ENCODE measurements at regions of chr12 and their contacts with region 1.

Region 1: DNA sequence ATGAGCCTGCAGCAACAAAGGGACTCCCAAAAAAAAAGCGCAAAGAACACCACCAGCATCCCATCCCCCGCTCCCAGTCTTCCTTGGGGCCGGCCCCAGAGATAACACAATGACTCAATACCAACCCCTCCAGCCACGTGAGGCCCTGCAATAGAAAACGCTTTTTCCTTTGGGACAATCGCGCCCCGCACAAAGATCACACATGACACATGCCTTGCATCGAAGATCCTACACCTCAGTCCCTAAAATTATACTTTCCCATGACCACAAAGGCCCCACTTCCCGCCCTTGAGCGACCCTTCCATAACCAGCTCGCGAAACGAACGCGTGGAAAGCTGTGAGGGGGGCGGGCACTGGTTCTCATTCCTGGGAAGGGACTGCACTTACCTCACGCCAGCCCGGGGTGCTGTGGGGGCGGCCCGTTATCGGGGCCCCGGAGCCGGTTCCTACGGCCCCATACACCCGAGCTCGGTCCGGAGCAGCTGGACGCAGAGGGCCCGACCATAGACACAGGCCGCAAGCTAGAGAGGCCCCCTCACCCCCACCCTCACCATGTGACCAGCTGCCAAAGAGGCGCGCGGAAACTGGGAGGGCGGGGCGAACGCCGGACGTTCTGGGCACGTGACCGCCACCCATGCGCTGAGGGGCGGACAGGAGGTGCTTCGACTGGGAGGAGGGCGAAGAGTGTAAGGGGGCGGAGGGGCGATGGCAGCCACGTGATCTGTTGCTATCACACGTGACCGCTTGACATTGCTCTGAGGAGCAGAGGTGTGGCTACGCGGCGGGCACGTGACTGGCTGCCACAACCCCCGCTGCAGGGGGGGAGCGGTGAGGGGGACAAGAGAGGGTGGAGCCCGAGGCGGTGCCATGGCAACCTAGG is at the start of gene CDK4:
- DNase-seq: peak; percentile 92 to 100 (median 99)
- ATAC-seq: peak; percentile 89
- H3K4me3 ChIP-seq: peak within 1 kb of the TSS; percentile 79
- H3K4me3 Mint-ChIP-seq: peak within 1 kb of the TSS; percentile 82 to 98 (median 92)
- H3K27ac ChIP-seq: peak within 1 kb of the TSS; percentile 90
- H3K27ac Mint-ChIP-seq: peak within 1 kb of the TSS; percentile 86 to 99 (median 93)
- H3K4me1 ChIP-seq: peaks cover 32 to 42% of the 10 kb centered on the region in 2 donors
- H3K4me1 Mint-ChIP-seq: peaks cover 35 to 62% (median 59%) of the 10 kb centered on the region in 7 donors
- H3K27me3 ChIP-seq: no peaks in the 10 kb centered on the region
- H3K27me3 Mint-ChIP-seq: peaks cover 0 to 2% (median 0%) of the 10 kb centered on the region in 5 donors
- total RNA-seq, gene CDK4: 23.8 to 108 (median 42.9) TPM

Region 2: GRCh38 chr12:55829967-55830600 is 1921.9 kb before region 1 on chr12:
- CTCF ChIA-PET with region 1: no interaction called
- POLR2A ChIA-PET with region 1: no interaction called
- intact Hi-C with region 1: loop called in 1 of 2 experiments (anchors 10 kb)
- DNase-seq: peak in 5 of 9 donors; percentile 16 to 44 (median 20)
- ATAC-seq: peak; percentile 2
- H3K4me3 ChIP-seq: peak overlapping the region; percentile 99
- H3K4me3 Mint-ChIP-seq: peak overlapping the region; percentile 88 to 99 (median 99)
- H3K27ac ChIP-seq: peak overlapping the region; percentile 84
- H3K27ac Mint-ChIP-seq: peak overlapping the region; percentile 85 to 98 (median 95)
- H3K4me1 ChIP-seq: peaks cover 37 to 40% of the 10 kb centered on the region in 2 donors
- H3K4me1 Mint-ChIP-seq: peaks cover 42 to 69% (median 53%) of the 10 kb centered on the region in 7 donors
- H3K27me3 ChIP-seq: no peaks in the 10 kb centered on the region
- H3K27me3 Mint-ChIP-seq: no peaks in the 10 kb centered on the region

Region 3: DNA sequence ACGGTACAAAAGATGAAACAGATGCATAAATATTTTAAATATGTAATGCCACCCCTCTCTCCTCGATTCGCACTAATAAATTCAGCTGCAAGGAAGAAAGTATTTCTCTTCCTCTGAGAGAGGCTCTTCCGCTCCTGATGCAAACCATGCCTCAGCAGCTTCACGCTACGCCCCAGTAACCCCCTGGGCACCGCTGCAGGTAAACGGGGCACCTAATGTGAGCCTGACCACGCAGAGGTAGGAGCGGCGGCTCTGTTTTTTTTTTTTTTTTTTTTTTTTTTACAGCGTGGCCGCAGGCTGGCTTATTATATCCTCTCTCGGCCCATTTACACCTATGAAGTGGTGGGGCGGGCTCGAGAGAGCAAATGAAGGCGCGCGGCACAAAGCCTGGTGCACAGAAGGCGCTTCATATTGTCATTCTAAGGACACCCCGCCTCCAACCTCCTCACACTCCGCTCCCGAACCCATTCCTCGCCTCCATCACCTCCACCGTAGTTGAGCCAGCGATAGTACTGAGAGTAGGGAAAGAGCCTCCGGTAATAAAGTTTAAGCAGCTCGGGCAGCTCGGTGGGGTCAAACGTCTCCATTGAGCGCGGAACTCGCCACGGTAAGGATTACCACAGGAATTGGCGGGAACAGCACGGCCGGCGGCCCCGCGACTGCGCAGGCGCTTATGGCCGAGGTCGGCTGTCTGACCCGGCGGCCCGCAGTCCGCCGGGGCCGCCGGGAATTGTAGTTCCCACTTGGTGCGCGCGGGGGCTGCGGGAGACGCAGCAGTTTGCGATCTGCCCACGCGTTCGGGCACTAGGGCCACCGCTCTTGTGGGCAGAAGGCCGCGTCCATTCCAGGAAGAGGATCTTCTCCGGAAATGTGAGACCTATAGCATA is 1000.1 kb before region 1 on chr12 and contains the start of gene PRIM1:
- CTCF ChIA-PET with region 1: no interaction called
- POLR2A ChIA-PET with region 1: no interaction called
- intact Hi-C with region 1: loop called in 1 of 2 experiments (anchors 10 kb)
- DNase-seq: peak; percentile 69 to 91 (median 78)
- ATAC-seq: peak; percentile 93
- H3K4me3 ChIP-seq: peak within 1 kb of the TSS; percentile 98
- H3K4me3 Mint-ChIP-seq: peak within 1 kb of the TSS; percentile 88 to 98 (median 97)
- H3K27ac ChIP-seq: peak within 1 kb of the TSS; percentile 81
- H3K27ac Mint-ChIP-seq: peak within 1 kb of the TSS; percentile 80 to 99 (median 93)
- H3K4me1 ChIP-seq: peaks cover 3 to 7% of the 10 kb centered on the region in 2 donors
- H3K4me1 Mint-ChIP-seq: peaks cover 22 to 46% (median 42%) of the 10 kb centered on the region in 7 donors
- H3K27me3 ChIP-seq: no peaks in the 10 kb centered on the region
- H3K27me3 Mint-ChIP-seq: no peaks in the 10 kb centered on the region
- total RNA-seq, gene PRIM1: 11.5 to 39.8 (median 26.2) TPM

Region 4: DNA sequence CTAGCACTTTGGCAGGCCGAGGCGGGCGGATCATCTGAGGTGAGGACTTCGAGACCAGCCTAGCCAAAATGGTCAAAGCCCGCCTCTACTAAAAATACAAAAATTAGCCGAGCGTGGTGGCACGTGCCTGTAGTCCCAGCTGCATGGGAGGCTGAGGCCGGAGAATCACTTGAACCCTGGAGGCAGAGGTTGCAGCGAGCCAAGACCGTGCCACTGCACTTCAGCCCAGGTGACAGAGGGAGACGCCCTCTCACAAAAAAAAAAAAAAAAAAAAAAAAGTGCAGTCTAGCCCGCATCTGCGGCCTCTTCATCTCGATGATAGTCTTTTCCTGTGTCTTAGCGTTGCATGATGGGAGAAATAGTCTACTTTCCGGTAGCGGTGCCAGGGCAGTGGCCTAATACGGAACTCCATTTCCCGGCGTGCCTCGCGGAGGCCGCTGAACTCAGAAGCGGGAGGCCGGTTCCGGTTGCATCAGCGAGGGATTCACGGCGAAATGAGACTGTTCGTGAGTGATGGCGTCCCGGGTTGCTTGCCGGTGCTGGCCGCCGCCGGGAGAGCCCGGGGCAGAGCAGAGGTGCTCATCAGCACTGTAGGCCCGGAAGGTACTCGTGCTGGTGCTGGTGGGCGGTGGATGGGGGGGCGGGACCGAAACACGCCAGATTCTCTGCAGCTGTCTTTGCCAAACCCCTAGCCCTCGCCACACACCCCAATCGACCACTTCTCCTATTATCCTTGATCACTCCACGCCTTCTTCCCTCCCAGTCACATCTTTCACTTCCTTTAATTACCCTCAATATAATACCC is 264.2 kb before region 1 on chr12 and contains the start of gene MARS1:
- CTCF ChIA-PET with region 1: no interaction called
- POLR2A ChIA-PET with region 1: no interaction called
- intact Hi-C with region 1: loop called in 1 of 2 experiments (anchors 1 kb)
- DNase-seq: peak; percentile 71 to 95 (median 93)
- ATAC-seq: peak; percentile 99
- H3K4me3 ChIP-seq: peak within 1 kb of the TSS; percentile 89
- H3K4me3 Mint-ChIP-seq: peak within 1 kb of the TSS; percentile 89 to 100 (median 98)
- H3K27ac ChIP-seq: peak within 1 kb of the TSS; percentile 86
- H3K27ac Mint-ChIP-seq: peak within 1 kb of the TSS; percentile 86 to 99 (median 96)
- H3K4me1 ChIP-seq: peaks cover 17 to 21% of the 10 kb centered on the region in 2 donors
- H3K4me1 Mint-ChIP-seq: peaks cover 21 to 48% (median 40%) of the 10 kb centered on the region in 7 donors
- H3K27me3 ChIP-seq: no peaks in the 10 kb centered on the region
- H3K27me3 Mint-ChIP-seq: peaks cover 0 to 2% (median 0%) of the 10 kb centered on the region in 5 donors
- total RNA-seq, gene MARS1: 178 to 229 (median 197) TPM

Region 5: DNA sequence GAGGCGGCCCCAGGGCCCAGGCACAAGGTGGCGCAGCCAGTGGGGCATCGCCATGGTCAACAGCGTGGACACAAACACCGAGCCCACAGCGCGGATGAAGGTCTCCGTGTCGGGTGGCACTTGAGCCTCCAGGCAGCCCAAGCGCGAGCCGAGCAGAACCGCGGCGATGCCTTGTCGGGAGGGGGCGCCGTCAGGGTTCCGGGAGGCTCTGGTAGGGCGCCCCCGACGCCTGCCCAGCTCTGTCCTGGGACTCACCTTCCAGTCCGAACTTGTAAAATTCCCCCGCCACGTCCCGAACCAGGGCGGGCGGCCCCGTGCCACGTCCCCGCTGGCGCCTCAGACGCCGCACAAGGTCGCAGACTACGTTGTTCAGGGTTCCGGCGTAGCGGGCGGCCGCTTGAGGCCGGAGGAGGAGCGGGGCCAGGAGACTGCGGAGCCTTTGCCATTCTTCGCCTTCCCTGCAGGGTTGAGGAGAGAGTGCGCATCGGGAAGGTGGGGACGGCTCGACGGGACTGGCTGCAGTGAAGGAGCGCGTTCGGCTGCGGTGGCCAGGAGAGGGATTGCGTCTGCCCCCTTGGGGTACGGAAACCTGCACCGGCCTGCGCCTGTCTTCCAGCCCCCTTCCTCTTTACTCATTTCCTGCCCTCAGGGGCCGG is 13.1 kb after region 1 on chr12:
- CTCF ChIA-PET with region 1: interaction called, 14 read pairs
- POLR2A ChIA-PET with region 1: interaction called, 4 read pairs
- intact Hi-C with region 1: loop called (anchors 1 kb)
- DNase-seq: peak in 5 of 9 donors; percentile 42 to 62 (median 45)
- ATAC-seq: peak; percentile 79
- H3K4me3 ChIP-seq: peak overlapping the region; percentile 70
- H3K4me3 Mint-ChIP-seq: peak overlapping the region; percentile 72 to 93 (median 88)
- H3K27ac ChIP-seq: peak overlapping the region; percentile 39
- H3K27ac Mint-ChIP-seq: peak overlapping the region in 1 of 9 donors; percentile 71
- H3K4me1 ChIP-seq: peaks cover 15 to 26% of the 10 kb centered on the region in 2 donors
- H3K4me1 Mint-ChIP-seq: peaks cover 16 to 41% (median 32%) of the 10 kb centered on the region in 7 donors
- H3K27me3 ChIP-seq: peaks cover 0 to 12% of the 10 kb centered on the region in 2 donors
- H3K27me3 Mint-ChIP-seq: peaks cover 9 to 27% (median 17%) of the 10 kb centered on the region in 5 donors

Region 6: DNA sequence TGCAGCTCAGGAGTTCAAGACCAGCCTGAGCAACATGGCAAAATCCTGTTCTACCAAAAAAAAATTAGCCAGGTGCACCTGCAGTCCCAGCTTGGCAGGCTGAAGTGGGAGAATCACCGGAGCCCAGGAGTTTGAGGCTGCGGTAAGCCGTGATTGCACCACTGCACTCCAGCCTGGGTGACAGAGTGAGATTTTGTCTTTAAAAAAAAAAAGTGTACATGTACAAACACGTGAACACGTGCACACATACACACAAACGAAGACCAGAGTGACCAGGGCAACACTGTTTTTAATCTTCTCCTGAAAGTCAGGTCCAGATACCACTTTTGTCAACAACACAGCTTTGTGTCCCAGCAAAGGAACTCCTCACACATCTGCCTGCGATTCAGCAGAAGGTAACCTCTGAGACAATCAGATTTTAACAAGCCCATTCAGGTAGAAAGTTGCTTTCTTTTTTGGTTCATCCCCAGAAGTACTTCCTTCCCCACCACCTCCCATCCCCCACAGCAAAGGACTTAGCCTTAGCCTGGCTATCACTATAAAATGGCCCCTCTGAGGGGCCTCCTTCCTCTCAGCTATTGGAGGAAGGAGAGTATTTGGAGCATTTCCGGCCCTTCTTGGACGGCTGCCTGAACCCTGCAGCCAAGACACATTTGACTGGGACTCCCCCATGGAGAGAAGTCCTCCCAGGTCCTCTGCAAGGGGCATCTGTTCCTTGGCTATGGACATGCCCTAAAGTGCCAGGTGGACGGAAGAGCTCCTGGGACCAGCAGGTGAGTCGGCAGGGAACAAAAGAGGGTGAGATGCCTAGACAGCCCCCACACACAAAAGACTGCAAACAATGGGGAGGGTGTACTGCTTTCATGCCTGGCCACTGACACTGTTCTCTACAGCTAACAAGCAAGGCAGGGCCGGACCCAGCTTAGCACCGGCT is 84.7 kb after region 1 on chr12:
- CTCF ChIA-PET with region 1: interaction called, 5 read pairs
- POLR2A ChIA-PET with region 1: interaction called, 3 read pairs
- intact Hi-C with region 1: loop called in 1 of 2 experiments (anchors 5 kb)
- DNase-seq: peak in 6 of 9 donors; percentile 25 to 51 (median 39)
- ATAC-seq: peak; percentile 29
- H3K4me3 ChIP-seq: peak overlapping the region; percentile 53
- H3K4me3 Mint-ChIP-seq: peak overlapping the region; percentile 58 to 97 (median 76)
- H3K27ac ChIP-seq: peak overlapping the region; percentile 89
- H3K27ac Mint-ChIP-seq: peak overlapping the region; percentile 87 to 97 (median 94)
- H3K4me1 ChIP-seq: peaks cover 91 to 95% of the 10 kb centered on the region in 2 donors
- H3K4me1 Mint-ChIP-seq: peaks cover 73 to 99% (median 91%) of the 10 kb centered on the region in 7 donors
- H3K27me3 ChIP-seq: no peaks in the 10 kb centered on the region
- H3K27me3 Mint-ChIP-seq: no peaks in the 10 kb centered on the region

Region 7: DNA sequence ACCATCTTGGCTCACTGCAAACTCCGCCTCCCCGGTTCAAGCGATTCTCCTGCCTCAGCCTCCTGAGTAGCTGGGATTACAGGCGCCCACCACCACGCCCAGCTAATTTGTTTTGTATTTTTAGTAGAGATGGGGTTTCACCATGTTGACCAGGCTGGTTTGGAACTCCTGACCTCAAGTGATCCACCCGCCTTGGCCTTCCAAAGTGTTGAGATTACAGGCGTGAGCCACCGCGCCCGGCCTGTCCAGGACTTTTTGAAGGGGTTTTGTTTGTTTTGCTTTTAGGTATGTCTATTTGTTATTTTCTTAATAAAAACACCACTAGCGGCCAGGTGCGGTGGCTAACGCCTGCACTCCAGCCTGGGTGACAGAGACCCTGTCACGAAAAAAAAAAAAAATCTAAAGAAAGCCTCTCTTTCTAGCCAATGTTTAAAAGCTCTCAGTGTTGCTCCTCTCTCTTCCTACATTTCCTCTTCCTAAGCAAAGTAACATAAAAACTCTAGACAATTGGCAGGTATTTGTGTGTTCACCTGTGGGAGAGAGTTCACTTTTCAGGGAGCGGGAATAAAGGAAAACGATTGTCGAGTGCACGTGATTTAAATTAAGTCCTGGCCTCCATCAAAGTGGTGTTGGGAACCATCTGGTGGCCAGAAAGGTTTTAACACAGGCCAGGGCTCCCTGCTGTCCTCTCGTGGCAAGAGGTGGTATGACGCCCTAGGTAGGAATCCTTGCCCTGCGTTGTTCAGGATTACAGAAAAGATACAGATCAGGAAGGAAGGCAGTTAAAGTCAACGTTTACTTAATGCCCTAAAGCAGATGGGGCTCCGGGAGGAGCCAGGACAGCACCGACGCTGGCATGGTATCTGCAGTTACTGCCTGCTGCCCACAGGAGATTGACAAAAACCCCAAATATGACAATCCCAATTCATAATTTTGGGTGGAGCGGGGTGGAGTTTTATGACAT is 153.1 kb after region 1 on chr12:
- CTCF ChIA-PET with region 1: interaction called, 13 read pairs
- POLR2A ChIA-PET with region 1: no interaction called
- intact Hi-C with region 1: loop called (anchors 1 kb)
- DNase-seq: peak; percentile 64 to 86 (median 76)
- ATAC-seq: peak; percentile 100
- H3K4me3 ChIP-seq: no peak overlapping the region
- H3K4me3 Mint-ChIP-seq: peak overlapping the region; percentile 31 to 73 (median 64)
- H3K27ac ChIP-seq: no peak overlapping the region
- H3K27ac Mint-ChIP-seq: peak overlapping the region in 5 of 9 donors; percentile 2 to 68 (median 51)
- H3K4me1 ChIP-seq: peaks cover 0 to under 1% of the 10 kb centered on the region in 2 donors
- H3K4me1 Mint-ChIP-seq: peaks cover 5 to 11% (median 6%) of the 10 kb centered on the region in 7 donors
- H3K27me3 ChIP-seq: no peaks in the 10 kb centered on the region
- H3K27me3 Mint-ChIP-seq: peaks cover 4 to 36% (median 17%) of the 10 kb centered on the region in 5 donors

Region 8: DNA sequence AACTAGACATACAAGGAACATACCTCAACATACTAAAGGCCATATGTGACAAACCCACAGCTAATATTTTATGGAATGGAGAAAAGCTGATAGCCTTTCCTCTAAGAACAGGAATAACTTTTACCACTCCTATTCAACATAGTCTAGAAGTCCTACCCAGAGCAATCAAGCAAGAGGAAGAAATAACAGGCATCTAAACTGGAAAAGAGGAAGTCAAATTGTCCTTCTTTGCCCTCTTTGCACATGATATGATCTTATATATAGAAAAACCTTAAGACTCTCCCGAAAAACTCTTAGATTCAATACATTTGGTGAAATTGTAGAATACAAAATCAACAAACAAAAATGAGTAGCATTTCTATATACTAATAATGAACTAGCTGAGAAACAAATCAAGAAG is 299.4 kb after region 1 on chr12:
- CTCF ChIA-PET with region 1: no interaction called
- POLR2A ChIA-PET with region 1: no interaction called
- intact Hi-C with region 1: no loop called
- DNase-seq: no peak
- ATAC-seq: no peak
- H3K4me3 ChIP-seq: no peak overlapping the region
- H3K4me3 Mint-ChIP-seq: no peak overlapping the region
- H3K27ac ChIP-seq: no peak overlapping the region
- H3K27ac Mint-ChIP-seq: no peak overlapping the region
- H3K4me1 ChIP-seq: no peaks in the 10 kb centered on the region
- H3K4me1 Mint-ChIP-seq: no peaks in the 10 kb centered on the region
- H3K27me3 ChIP-seq: no peaks in the 10 kb centered on the region
- H3K27me3 Mint-ChIP-seq: peaks cover 0 to 30% (median 13%) of the 10 kb centered on the region in 5 donors

Region 9: DNA sequence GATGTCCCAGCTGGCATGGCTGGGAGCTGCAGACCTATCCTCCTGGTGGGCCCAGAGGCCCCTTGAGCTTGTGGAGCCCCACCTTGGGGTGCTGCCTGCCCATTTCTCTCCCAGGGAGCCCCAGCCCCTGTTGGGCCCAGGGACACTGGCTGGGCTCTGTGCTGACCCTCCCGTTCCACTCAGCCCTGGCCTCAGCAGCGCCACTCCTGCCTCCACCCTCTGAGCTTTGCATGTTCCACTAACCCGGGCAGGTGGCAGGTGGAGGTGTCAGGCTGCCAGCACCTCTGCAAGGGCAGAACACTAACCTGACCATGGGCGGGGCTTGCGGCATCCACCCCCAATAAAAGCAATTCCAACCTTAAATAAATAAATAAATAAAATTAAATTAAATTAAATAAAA is 869.1 kb after region 1 on chr12:
- CTCF ChIA-PET with region 1: no interaction called
- POLR2A ChIA-PET with region 1: no interaction called
- intact Hi-C with region 1: no loop called
- DNase-seq: no peak
- ATAC-seq: no peak
- H3K4me3 ChIP-seq: no peak overlapping the region
- H3K4me3 Mint-ChIP-seq: no peak overlapping the region
- H3K27ac ChIP-seq: no peak overlapping the region
- H3K27ac Mint-ChIP-seq: no peak overlapping the region
- H3K4me1 ChIP-seq: no peaks in the 10 kb centered on the region
- H3K4me1 Mint-ChIP-seq: no peaks in the 10 kb centered on the region
- H3K27me3 ChIP-seq: no peaks in the 10 kb centered on the region
- H3K27me3 Mint-ChIP-seq: peaks cover 0 to 5% (median 0%) of the 10 kb centered on the region in 5 donors